HCT116 (cell line): ENCODE measurements at regions of chr11 and their contacts with region 1.

Region 1: GRCh38 chr11:124875943-124876817 is 10.9 kb downstream of the ROBO3 start:
- DNase-seq: peak; percentile 94
- ATAC-seq: peak; percentile 91
- H3K4me3 ChIP-seq: peak overlapping the region; percentile 58 to 61
- H3K27ac ChIP-seq: peak overlapping the region; percentile 83
- H3K4me1 ChIP-seq: peaks cover 12 to 23% of the 10 kb centered on the region in 2 experiments
- H3K27me3 ChIP-seq: 0 out of 2 replicates have a peak, but pooled peaks cover 6% of the 10 kb centered on the region
- CTCF ChIP-seq: peak; percentile 58 to 67 (median 66)
- POLR2A ChIP-seq: peak; percentile 15
- RAD21 ChIP-seq: peak; percentile 34

Region 2: GRCh38 chr11:124612045-124612444 is 264.1 kb before region 1 on chr11:
- CTCF ChIA-PET with region 1: no interaction called
- POLR2A ChIA-PET with region 1: no interaction called
- RAD21 ChIA-PET with region 1: no interaction called
- intact Hi-C with region 1: no loop called
- DNase-seq: no peak
- ATAC-seq: no peak
- H3K4me3 ChIP-seq: no peak overlapping the region
- H3K27ac ChIP-seq: no peak overlapping the region
- H3K4me1 ChIP-seq: no peaks in the 10 kb centered on the region
- H3K27me3 ChIP-seq: no peaks in the 10 kb centered on the region
- CTCF ChIP-seq: no peak
- POLR2A ChIP-seq: no peak
- RAD21 ChIP-seq: no peak

Region 3: DNA sequence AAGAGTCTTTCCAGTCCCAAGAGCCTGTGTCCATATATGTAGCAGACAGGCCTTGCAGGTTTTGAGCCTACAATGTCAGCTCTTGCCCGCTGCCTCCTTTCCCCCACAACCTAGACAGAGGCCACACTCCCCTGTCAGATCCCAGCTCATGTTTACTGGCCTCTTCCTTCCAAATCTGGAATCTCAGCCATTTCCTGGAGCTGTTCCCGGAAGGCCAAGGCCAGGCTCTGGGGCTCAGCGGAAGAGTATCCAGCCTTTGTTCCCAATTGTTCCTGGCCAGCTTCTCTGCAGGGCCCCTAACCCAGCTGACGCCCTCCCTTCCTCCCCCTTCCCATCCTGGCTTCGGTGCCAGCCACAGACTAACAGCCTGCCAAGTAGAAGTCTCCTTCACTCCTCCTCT is 22.5 kb after region 1 on chr11:
- CTCF ChIA-PET with region 1: interaction called, 15 read pairs
- POLR2A ChIA-PET with region 1: interaction called, 19 read pairs
- RAD21 ChIA-PET with region 1: no interaction called
- intact Hi-C with region 1: no loop called
- DNase-seq: no peak
- ATAC-seq: peak; percentile 6; the same call in 1 of the 2 replicates
- H3K4me3 ChIP-seq: no peak overlapping the region; a peak in 1 of 4 replicates
- H3K27ac ChIP-seq: no peak overlapping the region
- H3K4me1 ChIP-seq: peaks cover 6 to 42% of the 10 kb centered on the region in 2 experiments
- H3K27me3 ChIP-seq: no peaks in the 10 kb centered on the region
- CTCF ChIP-seq: no peak
- POLR2A ChIP-seq: no peak
- RAD21 ChIP-seq: no peak

Region 4: GRCh38 chr11:124953753-124954589 is 77.8 kb after region 1 on chr11 and contains the start of gene CCDC15:
- CTCF ChIA-PET with region 1: interaction called, 15 read pairs
- POLR2A ChIA-PET with region 1: interaction called, 17 read pairs
- RAD21 ChIA-PET with region 1: interaction called in 1 of 2 experiments, 5 read pairs
- intact Hi-C with region 1: loop called (anchors 2 kb)
- DNase-seq: peak; percentile 94
- ATAC-seq: peak; percentile 98
- H3K4me3 ChIP-seq: peak within 1 kb of the TSS; percentile 68 to 82
- H3K27ac ChIP-seq: peak within 1 kb of the TSS; percentile 64
- H3K4me1 ChIP-seq: peaks cover 7 to 17% of the 10 kb centered on the region in 2 experiments
- H3K27me3 ChIP-seq: no peaks in the 10 kb centered on the region
- CTCF ChIP-seq: no peak
- POLR2A ChIP-seq: peak; percentile 86
- RAD21 ChIP-seq: no peak; the same call in 1 of the 2 replicates
- total RNA-seq, gene CCDC15: 2.4 TPM